ENCODE measurements at regions of chr7 and their contacts with region 1.

Region 1: GRCh38 chr7:32212321-32212720 is 142.1 kb upstream of the PDE1C start:
- DNase-seq: no peak
- H3K4me3 ChIP-seq: no peak overlapping the region
- H3K27ac ChIP-seq: no peak overlapping the region
- H3K4me1 ChIP-seq: no peaks in the 10 kb centered on the region
- H3K27me3 ChIP-seq: no peaks in the 10 kb centered on the region
- CTCF ChIP-seq: no peak

Region 2: GRCh38 chr7:32357535-32358277 is 145.4 kb after region 1 on chr7:
- CTCF ChIA-PET with region 1: interaction called, 4 read pairs
- dilution Hi-C with region 1: loop called (anchors 5 kb)
- in situ Hi-C with region 1: loop called (anchors 5 kb)
- intact Hi-C with region 1: loop called (anchors 1 kb)
- DNase-seq: peak; percentile 22
- H3K4me3 ChIP-seq: no peak overlapping the region
- H3K27ac ChIP-seq: no peak overlapping the region
- H3K4me1 ChIP-seq: no peaks in the 10 kb centered on the region
- H3K27me3 ChIP-seq: peaks cover 3% of the 10 kb centered on the region
- CTCF ChIP-seq: peak; percentile 51 to 66

Measured in mammary epithelial cell (primary cell).